Left colon (tissue), 2 donors: ENCODE measurements at regions of chr9 and their contacts with region 1.

Region 1: GRCh38 chr9:114291064-114291474 is 31.8 kb upstream of the ORM1 start:
- DNase-seq: peak; percentile 41 to 75
- ATAC-seq: peak; percentile 47

Region 2: GRCh38 chr9:114108016-114108833 is 182.8 kb before region 1 on chr9:
- intact Hi-C with region 1: loop called in 1 of 2 experiments (anchors 5 kb)
- DNase-seq: peak; percentile 62 to 83
- ATAC-seq: peak; percentile 99

Region 3: GRCh38 chr9:114138552-114138971 is 152.5 kb before region 1 on chr9:
- intact Hi-C with region 1: no loop called
- DNase-seq: no peak
- ATAC-seq: no peak

Region 4: GRCh38 chr9:114351932-114352331 is 60.9 kb after region 1 on chr9:
- intact Hi-C with region 1: no loop called
- DNase-seq: no peak
- ATAC-seq: no peak

Region 5: DNA sequence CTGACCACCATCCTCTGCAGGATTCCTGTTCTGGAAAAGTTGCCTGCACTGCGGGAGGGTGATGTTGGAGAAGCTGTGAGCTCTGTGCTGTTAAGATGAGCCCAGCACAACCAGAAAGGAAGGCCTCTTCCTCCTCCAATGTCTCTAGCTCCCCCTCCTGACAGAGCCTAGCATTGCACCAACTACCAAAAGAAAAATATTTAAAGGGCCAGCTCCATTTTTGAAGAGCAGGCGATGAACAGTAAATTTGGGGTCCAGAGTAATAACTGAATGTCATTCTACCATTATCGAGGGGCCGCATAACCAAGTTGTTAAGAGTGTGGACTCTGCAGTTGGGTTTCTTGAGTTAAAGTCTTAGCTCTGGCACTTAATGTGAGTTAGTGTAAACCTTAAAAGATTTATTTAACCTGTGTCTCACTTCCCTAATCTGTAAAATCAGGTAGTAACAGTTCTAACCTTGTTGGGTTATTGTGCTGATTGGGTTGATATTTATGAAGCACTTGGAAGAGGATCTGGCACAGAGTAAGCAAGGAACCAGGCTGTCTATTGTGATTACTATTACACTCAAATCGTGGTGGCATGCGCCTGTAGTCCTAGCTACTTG is 362.6 kb after region 1 on chr9:
- intact Hi-C with region 1: no loop called
- DNase-seq: peak; percentile 51 to 83
- ATAC-seq: peak; percentile 85